Right ventricle myocardium inferior (tissue), 1 donor: ENCODE measurements at regions of chr9 and their contacts with region 1.

Region 1: GRCh38 chr9:97900738-97901565 is 21.3 kb downstream of the TRMO start:
- DNase-seq: no peak
- ATAC-seq: no peak

Region 2: GRCh38 chr9:97468658-97469448 is 432.1 kb before region 1 on chr9:
- intact Hi-C with region 1: loop called (anchors 2 kb)
- DNase-seq: peak; percentile 85
- ATAC-seq: peak; percentile 96

Region 3: DNA sequence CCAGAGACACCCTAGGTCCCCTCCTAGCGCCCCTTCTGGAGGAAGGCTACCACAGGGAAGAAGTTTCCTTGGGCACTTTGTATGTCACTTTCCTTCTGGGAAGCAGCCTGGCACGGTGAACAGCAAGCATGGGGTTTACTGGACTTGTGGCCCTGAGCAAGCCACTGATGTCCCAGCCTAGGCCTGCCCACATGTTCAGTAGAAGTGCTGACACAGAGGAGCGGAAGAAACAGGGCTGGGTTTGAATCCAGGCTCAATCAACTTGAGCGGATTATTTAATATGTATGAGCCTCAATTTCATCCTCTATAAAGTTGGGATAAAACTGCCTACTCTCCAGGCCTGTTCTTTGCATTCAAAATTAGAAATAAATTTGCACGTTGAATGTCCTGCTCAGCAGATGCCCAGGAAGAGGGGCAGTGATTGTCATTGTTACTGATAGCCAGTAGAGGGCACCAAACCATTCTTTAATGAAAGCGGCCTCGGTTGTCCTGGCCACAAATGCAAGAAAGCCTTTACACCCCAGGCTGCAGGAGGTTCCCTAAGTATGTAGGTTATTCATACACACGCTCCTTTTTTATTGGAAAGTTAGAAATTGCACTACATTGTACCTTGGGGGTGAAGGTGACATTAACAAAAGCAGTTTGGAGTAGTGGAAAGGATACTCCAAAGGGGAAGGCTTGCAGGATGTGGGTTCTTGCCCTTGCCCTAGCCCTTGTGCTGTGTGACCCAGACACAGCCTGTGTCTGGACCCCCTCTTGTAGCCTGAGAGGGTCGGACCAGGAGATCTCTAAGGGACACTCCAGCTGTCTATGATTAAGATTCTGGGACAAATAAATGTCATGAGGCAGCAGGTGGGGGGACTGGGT is 190.4 kb before region 1 on chr9:
- intact Hi-C with region 1: loop called (anchors 1 kb)
- DNase-seq: no peak
- ATAC-seq: peak; percentile 83